Calu3 (cell line): ENCODE measurements at regions of chr3 and their contacts with region 1.

Region 1: DNA sequence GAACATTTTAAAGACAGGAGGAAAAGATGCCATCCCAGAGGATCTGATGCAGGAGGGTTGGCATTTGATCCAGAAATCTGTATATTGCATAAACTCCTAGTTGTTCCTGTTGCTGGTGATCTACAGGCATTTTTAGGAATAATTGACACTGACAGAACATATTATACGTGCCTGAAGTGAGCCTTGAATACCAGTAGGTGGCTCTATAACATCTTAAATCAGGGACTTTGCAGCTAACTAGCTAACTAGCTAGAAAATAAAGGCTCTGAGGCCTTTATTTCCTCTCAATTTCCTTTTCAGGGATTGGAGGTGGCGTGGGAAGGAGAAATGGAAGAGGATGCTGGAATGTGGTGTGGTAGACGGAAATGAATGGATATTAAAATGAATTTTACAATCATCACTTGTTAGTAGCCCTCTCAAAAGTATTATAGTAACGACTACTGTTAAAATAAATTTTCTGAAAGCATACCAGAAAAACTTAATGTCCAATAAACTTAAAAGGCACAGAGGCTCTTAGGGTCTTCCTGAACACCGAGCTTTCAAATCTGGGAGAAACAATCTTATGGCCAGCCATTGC is 73.9 kb upstream of the ZBED2 start:
- DNase-seq: no peak
- H3K4me3 Mint-ChIP-seq: no peak overlapping the region
- H3K27ac Mint-ChIP-seq: no peak overlapping the region
- H3K4me1 Mint-ChIP-seq: peaks cover 33% of the 10 kb centered on the region
- H3K27me3 Mint-ChIP-seq: no peaks in the 10 kb centered on the region
- CTCF ChIP-seq: peak; percentile 32

Region 2: GRCh38 chr3:111691293-111691909 is 22.4 kb after region 1 on chr3:
- CTCF ChIA-PET with region 1: interaction called, 32 read pairs
- intact Hi-C with region 1: loop called (anchors 1 kb)
- DNase-seq: no peak
- H3K4me3 Mint-ChIP-seq: no peak overlapping the region
- H3K27ac Mint-ChIP-seq: no peak overlapping the region
- H3K4me1 Mint-ChIP-seq: peaks cover 9% of the 10 kb centered on the region
- H3K27me3 Mint-ChIP-seq: no peaks in the 10 kb centered on the region
- CTCF ChIP-seq: no peak